PC-9 (cell line): ENCODE measurements at regions of chr13 and their contacts with region 1.

Region 1: DNA sequence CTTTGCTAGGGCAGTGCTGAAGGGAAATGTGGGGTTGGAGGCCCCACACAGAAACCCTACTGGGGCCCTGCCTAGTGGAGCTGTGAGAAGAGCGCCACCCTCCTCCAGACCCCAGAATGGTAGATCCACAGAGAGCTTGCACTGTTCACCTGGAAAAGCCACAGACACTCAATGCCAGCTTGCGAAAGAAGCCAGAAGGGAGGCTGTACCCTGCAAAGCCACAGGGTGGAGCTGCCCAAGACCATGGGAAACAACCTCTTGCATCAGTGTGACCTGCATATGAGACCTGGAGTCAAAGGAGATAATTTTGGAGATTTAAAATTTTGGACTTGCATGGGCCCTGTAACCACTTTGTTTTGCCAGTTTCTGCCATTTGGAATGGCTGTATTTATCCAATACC is 615.4 kb upstream of the MIR17HG start:
- DNase-seq: no peak
- H3K4me3 ChIP-seq: no peak overlapping the region
- H3K27ac ChIP-seq: no peak overlapping the region
- H3K4me1 ChIP-seq: no peaks in the 10 kb centered on the region
- H3K27me3 ChIP-seq: no peaks in the 10 kb centered on the region
- CTCF ChIP-seq: peak; percentile 34; the same call in 1 of the 2 replicates

Region 2: DNA sequence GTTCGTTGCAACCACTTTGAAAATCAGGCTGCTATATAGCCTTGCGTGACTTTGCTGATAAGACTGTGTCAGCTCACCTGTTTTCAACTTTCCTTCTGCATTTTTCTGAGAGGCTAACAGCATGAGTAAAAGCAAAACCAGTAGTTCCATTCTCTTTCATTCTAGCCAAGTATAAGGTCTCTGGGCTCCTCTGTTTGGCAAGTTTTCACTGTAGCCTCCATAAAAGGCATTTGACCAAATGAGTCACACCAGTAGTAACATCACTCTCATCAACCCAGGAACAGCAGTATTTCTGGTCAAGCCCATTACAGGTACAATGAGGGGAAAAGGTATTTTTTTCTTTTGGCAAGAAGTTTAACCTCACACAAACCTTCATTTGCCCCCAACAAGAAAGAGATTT is 534.3 kb before region 1 on chr13:
- CTCF ChIA-PET with region 1: interaction called, 25 read pairs
- POLR2A ChIA-PET with region 1: no interaction called
- intact Hi-C with region 1: no loop called
- DNase-seq: no peak
- H3K4me3 ChIP-seq: no peak overlapping the region
- H3K27ac ChIP-seq: no peak overlapping the region
- H3K4me1 ChIP-seq: no peaks in the 10 kb centered on the region
- H3K27me3 ChIP-seq: no peaks in the 10 kb centered on the region
- CTCF ChIP-seq: no peak

Region 3: DNA sequence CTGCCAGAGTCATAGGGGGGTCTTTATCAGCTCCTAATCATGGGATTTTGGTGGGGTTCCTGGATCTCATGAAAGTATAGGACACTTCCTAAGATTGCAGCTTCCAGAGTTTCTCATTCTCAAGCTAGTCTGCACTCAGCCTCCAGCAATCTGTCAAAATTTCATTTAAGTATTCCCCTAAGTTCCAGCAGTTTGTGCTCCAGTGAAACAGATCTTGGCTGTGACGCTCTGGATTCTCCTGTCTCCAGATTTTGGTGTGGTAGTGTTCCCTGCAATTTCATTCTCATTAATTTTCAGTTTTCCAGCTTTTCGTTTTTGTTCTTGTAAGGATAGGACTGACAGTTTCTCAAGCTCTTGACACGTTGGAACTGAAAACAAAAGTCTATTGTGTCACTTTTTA is 293.5 kb before region 1 on chr13:
- CTCF ChIA-PET with region 1: no interaction called
- POLR2A ChIA-PET with region 1: no interaction called
- intact Hi-C with region 1: no loop called
- DNase-seq: no peak
- H3K4me3 ChIP-seq: no peak overlapping the region
- H3K27ac ChIP-seq: no peak overlapping the region
- H3K4me1 ChIP-seq: no peaks in the 10 kb centered on the region
- H3K27me3 ChIP-seq: no peaks in the 10 kb centered on the region
- CTCF ChIP-seq: no peak